PC-3 (cell line): ENCODE measurements at regions of chr20 and their contacts with region 1.

Region 1: GRCh38 chr20:10366898-10367692 is 66.9 kb downstream of the MKKS start:
- DNase-seq: no peak
- ATAC-seq: no peak
- H3K4me3 ChIP-seq: no peak overlapping the region
- H3K27ac ChIP-seq: no peak overlapping the region
- H3K4me1 ChIP-seq: peaks cover 4% of the 10 kb centered on the region; the same call in 1 of the 2 replicates
- H3K27me3 ChIP-seq: peaks cover 47% of the 10 kb centered on the region
- CTCF ChIP-seq: no peak

Region 2: DNA sequence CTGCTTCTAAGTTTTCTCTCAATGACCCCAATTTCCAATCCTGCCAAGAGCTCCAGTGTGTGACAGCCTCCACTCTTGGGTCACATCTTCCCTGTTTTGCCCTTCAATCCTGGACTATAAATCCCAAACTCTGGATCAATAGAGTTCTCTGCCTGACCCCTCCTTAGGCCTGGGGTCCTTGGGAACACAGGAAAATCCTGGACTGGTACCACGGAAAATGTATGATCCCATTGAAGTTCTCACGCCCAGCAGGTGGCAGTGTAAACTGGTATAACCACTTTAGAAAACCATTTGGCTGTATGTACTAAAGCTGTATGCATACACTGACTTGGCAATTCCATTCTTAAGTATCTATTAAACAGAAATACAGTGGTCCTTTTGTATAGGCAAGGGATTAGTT is 50.5 kb before region 1 on chr20:
- CTCF ChIA-PET with region 1: no interaction called
- POLR2A ChIA-PET with region 1: no interaction called
- intact Hi-C with region 1: no loop called
- DNase-seq: peak; percentile 57
- ATAC-seq: peak; percentile 45
- H3K4me3 ChIP-seq: no peak overlapping the region
- H3K27ac ChIP-seq: no peak overlapping the region
- H3K4me1 ChIP-seq: no peaks in the 10 kb centered on the region
- H3K27me3 ChIP-seq: peaks cover 27% of the 10 kb centered on the region
- CTCF ChIP-seq: peak; percentile 73

Region 3: GRCh38 chr20:10332656-10333415 is 34.3 kb before region 1 on chr20:
- CTCF ChIA-PET with region 1: no interaction called
- POLR2A ChIA-PET with region 1: no interaction called
- intact Hi-C with region 1: no loop called
- DNase-seq: no peak
- ATAC-seq: no peak
- H3K4me3 ChIP-seq: no peak overlapping the region
- H3K27ac ChIP-seq: no peak overlapping the region
- H3K4me1 ChIP-seq: no peaks in the 10 kb centered on the region
- H3K27me3 ChIP-seq: peaks cover 79% of the 10 kb centered on the region
- CTCF ChIP-seq: no peak

Region 4: GRCh38 chr20:10347086-10347880 is 19.8 kb before region 1 on chr20:
- CTCF ChIA-PET with region 1: no interaction called
- POLR2A ChIA-PET with region 1: no interaction called
- intact Hi-C with region 1: no loop called
- DNase-seq: no peak
- ATAC-seq: no peak
- H3K4me3 ChIP-seq: no peak overlapping the region
- H3K27ac ChIP-seq: no peak overlapping the region
- H3K4me1 ChIP-seq: no peaks in the 10 kb centered on the region
- H3K27me3 ChIP-seq: peaks cover 28% of the 10 kb centered on the region; the same call in 1 of the 2 replicates
- CTCF ChIP-seq: no peak

Region 5: DNA sequence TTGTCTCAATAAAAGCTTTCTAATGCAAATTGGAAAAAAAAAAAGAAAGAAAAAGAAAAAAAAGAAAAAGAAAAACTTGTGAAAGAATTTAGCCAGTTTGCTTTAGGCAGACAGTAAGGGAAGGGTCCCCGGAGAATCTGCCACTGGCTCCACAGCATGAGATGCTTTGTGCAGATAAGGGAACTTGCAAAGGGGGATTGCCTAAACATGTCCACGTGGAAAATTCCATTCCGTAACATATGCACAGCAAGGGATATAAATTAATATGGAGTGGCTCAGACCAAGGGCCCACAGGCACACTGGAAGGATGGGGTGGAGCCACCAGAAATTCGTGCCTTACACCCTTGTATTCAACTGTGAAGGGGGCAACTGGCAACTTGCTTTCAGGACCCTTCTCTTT is 21.5 kb after region 1 on chr20:
- CTCF ChIA-PET with region 1: interaction called, 10 read pairs
- POLR2A ChIA-PET with region 1: no interaction called
- intact Hi-C with region 1: no loop called
- DNase-seq: no peak
- ATAC-seq: no peak
- H3K4me3 ChIP-seq: no peak overlapping the region
- H3K27ac ChIP-seq: no peak overlapping the region
- H3K4me1 ChIP-seq: no peaks in the 10 kb centered on the region
- H3K27me3 ChIP-seq: peaks cover 12% of the 10 kb centered on the region; the same call in 1 of the 2 replicates
- CTCF ChIP-seq: no peak